Esophagus muscularis mucosa (tissue), 4 donors: ENCODE measurements at regions of chr11 and their contacts with region 1.

Region 1: DNA sequence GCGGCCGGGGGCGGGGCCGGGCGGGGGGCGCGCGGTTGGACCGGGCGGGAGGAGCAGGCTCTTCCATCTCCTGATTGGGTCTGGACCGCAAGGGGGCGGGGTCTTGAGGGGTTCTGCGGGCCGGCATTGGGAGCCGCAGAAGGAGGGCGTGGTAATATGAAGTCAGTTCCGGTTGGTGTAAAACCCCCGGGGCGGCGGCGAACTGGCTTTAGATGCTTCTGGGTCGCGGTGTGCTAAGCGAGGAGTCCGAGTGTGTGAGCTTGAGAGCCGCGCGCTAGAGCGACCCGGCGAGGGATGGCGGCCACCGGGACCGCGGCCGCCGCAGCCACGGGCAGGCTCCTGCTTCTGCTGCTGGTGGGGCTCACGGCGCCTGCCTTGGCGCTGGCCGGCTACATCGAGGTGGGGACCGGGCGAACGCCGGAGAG is at the start of gene APLP2:
- DNase-seq: peak; percentile 100
- H3K4me3 ChIP-seq: peak within 1 kb of the TSS; percentile 85 to 97 (median 94)
- H3K27ac ChIP-seq: peak within 1 kb of the TSS; percentile 97 to 98 (median 97)
- H3K4me1 ChIP-seq: peaks cover 24 to 41% (median 36%) of the 10 kb centered on the region in 4 donors
- H3K27me3 ChIP-seq: no peaks in the 10 kb centered on the region
- CTCF ChIP-seq: no peak
- EP300 ChIP-seq: no peak
- POLR2A ChIP-seq: peak; percentile 85
- total RNA-seq, gene APLP2: 311 to 479 (median 410) TPM

Region 2: DNA sequence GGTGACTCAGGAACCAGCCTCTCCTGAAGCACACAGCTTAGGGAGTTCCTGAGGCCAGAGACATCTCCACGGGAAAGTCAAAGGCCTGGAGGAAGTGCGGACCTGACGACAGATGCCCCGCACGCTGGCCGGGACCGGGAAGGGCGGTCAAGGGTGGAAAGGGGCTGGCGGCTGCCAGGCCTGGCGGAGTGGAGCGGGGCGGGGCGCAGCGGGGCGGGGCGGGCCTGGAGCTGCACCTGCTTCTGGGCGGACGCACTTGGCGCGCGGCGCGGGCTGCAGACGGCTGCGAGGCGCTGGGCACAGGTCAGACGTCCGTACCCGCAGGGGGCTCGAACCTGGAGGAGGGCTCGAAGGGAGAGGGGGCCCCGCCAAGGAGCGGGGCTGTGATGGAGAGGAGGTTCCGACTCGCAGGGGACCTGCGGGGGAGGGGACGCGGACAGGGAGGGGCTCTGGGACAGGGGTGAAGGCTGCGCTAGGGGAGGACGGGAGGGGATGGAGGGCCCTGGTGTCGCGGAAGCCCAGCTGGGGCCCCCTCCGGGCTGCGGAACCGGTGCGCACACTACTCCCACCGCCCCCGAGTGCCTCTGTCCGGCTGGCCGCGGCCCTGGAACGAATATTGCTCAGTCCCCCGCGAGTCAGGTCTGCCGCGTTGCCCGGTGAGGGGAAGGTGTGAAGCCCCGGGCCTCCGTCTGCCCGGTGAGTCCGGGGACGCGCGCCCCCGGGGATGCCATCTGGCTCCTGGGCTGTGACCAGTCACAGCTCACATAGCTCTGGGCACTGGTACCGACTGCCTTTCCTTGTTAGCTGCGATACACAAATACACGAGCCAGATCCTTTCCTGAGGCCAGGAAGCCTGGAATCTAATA is 253.9 kb before region 1 on chr11 and contains the start of gene TMEM45B:
- intact Hi-C with region 1: no loop called
- DNase-seq: no peak
- H3K4me3 ChIP-seq: peak within 1 kb of the TSS in 1 of 4 donors; percentile 24
- H3K27ac ChIP-seq: no peak within 1 kb of the TSS
- H3K4me1 ChIP-seq: peaks cover 3 to 9% (median 8%) of the 10 kb centered on the region in 4 donors
- H3K27me3 ChIP-seq: peaks cover 0 to 53% (median 4%) of the 10 kb centered on the region in 4 donors
- CTCF ChIP-seq: no peak
- EP300 ChIP-seq: no peak
- POLR2A ChIP-seq: no peak
- total RNA-seq, gene TMEM45B: 0.11 to 0.66 TPM in 2 of 4 donors, not detected in the others

Region 3: GRCh38 chr11:129922674-129923073 is 147.0 kb before region 1 on chr11:
- intact Hi-C with region 1: loop called (anchors 5 kb)
- DNase-seq: no peak
- H3K4me3 ChIP-seq: no peak overlapping the region
- H3K27ac ChIP-seq: no peak overlapping the region
- H3K4me1 ChIP-seq: no peaks in the 10 kb centered on the region
- H3K27me3 ChIP-seq: no peaks in the 10 kb centered on the region
- CTCF ChIP-seq: no peak
- EP300 ChIP-seq: no peak
- POLR2A ChIP-seq: no peak

Region 4: GRCh38 chr11:130002846-130003716 is 66.6 kb before region 1 on chr11:
- intact Hi-C with region 1: loop called (anchors 2 kb)
- DNase-seq: peak; percentile 99
- H3K4me3 ChIP-seq: peak overlapping the region; percentile 81 to 94 (median 89)
- H3K27ac ChIP-seq: peak overlapping the region; percentile 97 to 100 (median 98)
- H3K4me1 ChIP-seq: peaks cover 17 to 30% (median 26%) of the 10 kb centered on the region in 4 donors
- H3K27me3 ChIP-seq: no peaks in the 10 kb centered on the region
- CTCF ChIP-seq: peak in 1 of 3 experiments; percentile 14
- EP300 ChIP-seq: no peak
- POLR2A ChIP-seq: peak; percentile 87

Region 5: GRCh38 chr11:130124096-130124495 is 54.4 kb after region 1 on chr11:
- intact Hi-C with region 1: loop called (anchors 5 kb)
- DNase-seq: no peak
- H3K4me3 ChIP-seq: no peak overlapping the region
- H3K27ac ChIP-seq: peak overlapping the region; percentile 55 to 70 (median 58)
- H3K4me1 ChIP-seq: peaks cover 25 to 57% (median 39%) of the 10 kb centered on the region in 4 donors
- H3K27me3 ChIP-seq: no peaks in the 10 kb centered on the region
- CTCF ChIP-seq: no peak
- EP300 ChIP-seq: no peak
- POLR2A ChIP-seq: no peak